T-cell (primary cell): ENCODE measurements at regions of chr2 and their contacts with region 1.

Region 1: GRCh38 chr2:207625018-207625907 is at the start of gene METTL21A:
- DNase-seq: peak; percentile 90 to 98 (median 95)
- ATAC-seq: peak; percentile 78 to 84 (median 82)
- H3K4me3 ChIP-seq: peak within 1 kb of the TSS; percentile 99
- H3K4me3 Mint-ChIP-seq: peak within 1 kb of the TSS; percentile 90 to 92 (median 91)
- H3K27ac ChIP-seq: peak within 1 kb of the TSS; percentile 99
- H3K27ac Mint-ChIP-seq: peak within 1 kb of the TSS; percentile 88 to 91
- H3K4me1 ChIP-seq: peaks cover 6 to 35% of the 10 kb centered on the region in 2 experiments
- H3K4me1 Mint-ChIP-seq: peaks cover 35 to 44% (median 40%) of the 10 kb centered on the region in 3 donors
- H3K27me3 ChIP-seq: no peaks in the 10 kb centered on the region
- H3K27me3 Mint-ChIP-seq: no peaks in the 10 kb centered on the region
- total RNA-seq, gene METTL21A: 14.3 to 23.1 (median 18.2) TPM

Region 2: DNA sequence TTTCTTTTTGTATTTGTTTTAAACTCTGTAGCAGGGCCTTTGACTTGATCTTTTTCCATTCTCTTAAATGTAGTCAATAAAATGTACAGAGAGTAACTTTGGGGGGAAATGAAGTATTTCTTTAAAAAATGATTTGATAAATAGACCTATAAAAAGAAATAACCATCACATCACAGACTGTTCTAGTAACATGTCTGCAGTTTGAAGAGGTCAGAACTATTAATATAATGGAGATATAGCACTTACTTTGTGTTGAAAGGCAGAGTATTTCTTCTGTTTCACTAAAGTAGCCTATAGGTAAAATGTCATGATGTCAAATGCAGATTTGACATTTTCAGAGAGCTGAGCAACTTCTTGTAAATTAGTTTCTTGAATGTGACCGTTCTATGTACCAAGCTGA is 1038.7 kb before region 1 on chr2:
- CTCF ChIA-PET with region 1: no interaction called
- POLR2A ChIA-PET with region 1: no interaction called
- DNase-seq: no peak
- ATAC-seq: no peak
- H3K4me3 ChIP-seq: no peak overlapping the region
- H3K4me3 Mint-ChIP-seq: no peak overlapping the region
- H3K27ac ChIP-seq: no peak overlapping the region
- H3K27ac Mint-ChIP-seq: no peak overlapping the region
- H3K4me1 ChIP-seq: no peaks in the 10 kb centered on the region
- H3K4me1 Mint-ChIP-seq: no peaks in the 10 kb centered on the region
- H3K27me3 ChIP-seq: peaks cover 0 to 9% of the 10 kb centered on the region in 2 experiments
- H3K27me3 Mint-ChIP-seq: peaks cover 14 to 22% of the 10 kb centered on the region in 2 donors

Region 3: DNA sequence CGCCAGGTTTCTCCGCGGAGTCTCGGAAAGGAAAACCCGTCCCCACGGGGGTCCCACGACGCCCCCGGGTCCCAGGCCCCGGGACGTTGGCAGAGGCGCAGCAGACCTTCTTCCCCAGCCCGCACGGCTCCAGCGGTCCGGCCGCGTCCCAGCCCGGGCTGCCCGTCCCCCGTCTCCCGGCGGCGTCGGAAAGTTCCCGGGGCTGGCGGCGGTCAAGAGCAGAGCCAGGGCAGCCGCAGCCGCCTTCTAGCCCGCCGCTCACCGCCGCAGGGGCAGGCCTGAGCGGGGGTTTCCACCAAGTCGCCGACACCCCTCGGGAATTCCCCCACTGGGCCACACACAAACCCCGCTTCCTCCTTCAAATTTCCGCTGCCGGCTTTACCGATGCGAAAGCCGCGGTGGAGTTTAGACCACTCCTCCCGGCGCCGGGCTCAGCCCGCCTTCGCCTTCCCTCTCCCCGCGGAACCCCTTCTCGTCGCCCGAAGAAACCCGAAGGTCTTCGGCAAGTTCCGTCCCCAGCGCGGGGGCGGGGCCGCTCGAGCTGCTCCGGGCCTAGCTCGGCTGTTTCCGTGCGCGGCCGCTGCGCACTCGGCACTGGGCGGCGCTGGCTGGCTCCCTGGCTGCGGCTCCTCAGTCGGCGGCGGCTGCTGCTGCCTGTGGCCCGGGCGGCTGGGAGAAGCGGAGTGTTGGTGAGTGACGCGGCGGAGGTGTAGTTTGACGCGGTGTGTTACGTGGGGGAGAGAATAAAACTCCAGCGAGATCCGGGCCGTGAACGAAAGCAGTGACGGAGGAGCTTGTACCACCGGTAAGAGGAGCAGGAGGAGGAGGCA is 95.7 kb before region 1 on chr2 and contains the start of gene CREB1:
- CTCF ChIA-PET with region 1: interaction called, 3 to 18 read pairs
- POLR2A ChIA-PET with region 1: interaction called, 3 to 25 read pairs
- DNase-seq: peak; percentile 98 to 100 (median 99)
- ATAC-seq: peak; percentile 82 to 90 (median 86)
- H3K4me3 ChIP-seq: peak within 1 kb of the TSS; percentile 83 to 100
- H3K4me3 Mint-ChIP-seq: peak within 1 kb of the TSS; percentile 84 to 100 (median 99)
- H3K27ac ChIP-seq: peak within 1 kb of the TSS; percentile 100
- H3K27ac Mint-ChIP-seq: peak within 1 kb of the TSS; percentile 100
- H3K4me1 ChIP-seq: peaks cover 40 to 58% of the 10 kb centered on the region in 2 experiments
- H3K4me1 Mint-ChIP-seq: peaks cover 55 to 69% (median 67%) of the 10 kb centered on the region in 3 donors
- H3K27me3 ChIP-seq: no peaks in the 10 kb centered on the region
- H3K27me3 Mint-ChIP-seq: no peaks in the 10 kb centered on the region
- total RNA-seq, gene CREB1: 94.0 to 118 (median 100) TPM

Region 4: DNA sequence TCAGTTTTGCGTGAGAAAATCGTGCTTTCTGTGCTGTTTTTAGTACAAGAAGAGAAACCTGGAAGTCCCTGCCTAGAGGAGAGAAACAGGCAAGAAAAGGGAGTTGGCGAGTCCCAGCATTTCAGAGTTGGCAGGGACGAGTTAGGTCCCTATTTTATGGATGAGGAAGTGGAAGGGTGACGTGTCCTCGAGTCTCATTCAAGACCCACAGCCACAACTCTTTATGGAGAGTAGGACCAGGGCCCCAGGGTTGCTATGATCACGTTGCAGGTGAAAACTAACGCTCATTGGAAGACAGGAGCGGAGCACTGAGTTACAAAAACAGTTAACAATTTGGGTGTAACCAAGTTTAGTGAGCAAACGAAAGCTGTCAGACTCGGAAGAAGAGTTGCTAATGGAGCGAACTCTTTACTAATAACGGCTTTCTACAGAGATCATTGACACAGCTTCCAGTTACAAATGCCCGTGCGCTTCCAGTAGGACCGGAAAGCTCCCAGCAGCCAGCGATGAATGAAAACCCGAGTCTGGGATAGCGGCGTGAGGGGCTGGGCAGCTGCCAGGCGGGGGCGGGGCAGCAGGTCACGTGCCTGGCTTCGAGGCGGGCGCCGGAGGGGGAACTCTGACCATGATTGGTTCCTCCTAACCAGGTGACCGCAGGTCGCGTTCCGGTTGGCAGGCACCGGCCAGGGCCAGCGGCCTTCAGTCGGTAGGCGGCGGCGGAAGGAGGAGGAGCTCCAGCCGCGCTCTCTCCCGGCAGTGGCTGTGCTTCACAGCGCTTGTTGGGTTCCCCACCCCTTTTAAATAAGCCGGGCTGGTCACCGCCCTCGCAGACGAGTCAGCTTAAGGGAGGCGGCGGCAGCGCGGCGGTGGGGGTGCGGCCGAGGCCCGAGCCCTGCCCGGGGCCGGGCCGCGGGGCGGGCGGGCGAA is 85.8 kb after region 1 on chr2 and contains the start of gene CCNYL1:
- CTCF ChIA-PET with region 1: interaction called, 4 to 23 read pairs
- POLR2A ChIA-PET with region 1: interaction called, 3 to 18 read pairs
- DNase-seq: peak; percentile 90 to 99 (median 98)
- ATAC-seq: peak; percentile 95 to 98 (median 96)
- H3K4me3 ChIP-seq: peak within 1 kb of the TSS; percentile 84
- H3K4me3 Mint-ChIP-seq: peak within 1 kb of the TSS; percentile 95 to 99 (median 96)
- H3K27ac ChIP-seq: peak within 1 kb of the TSS; percentile 65
- H3K27ac Mint-ChIP-seq: peak within 1 kb of the TSS; percentile 77 to 86
- H3K4me1 ChIP-seq: peaks cover 8 to 17% of the 10 kb centered on the region in 2 experiments
- H3K4me1 Mint-ChIP-seq: peaks cover 26 to 34% (median 28%) of the 10 kb centered on the region in 3 donors
- H3K27me3 ChIP-seq: peaks cover 0 to 6% of the 10 kb centered on the region in 2 experiments
- H3K27me3 Mint-ChIP-seq: no peaks in the 10 kb centered on the region
- total RNA-seq, gene CCNYL1: 9.0 to 13.6 (median 11.0) TPM

Region 5: GRCh38 chr2:207792244-207792785 is 167.1 kb after region 1 on chr2:
- CTCF ChIA-PET with region 1: no interaction called
- POLR2A ChIA-PET with region 1: interaction called in 1 of 2 experiments, 14 read pairs
- DNase-seq: no peak
- ATAC-seq: no peak
- H3K4me3 ChIP-seq: no peak overlapping the region
- H3K4me3 Mint-ChIP-seq: no peak overlapping the region
- H3K27ac ChIP-seq: no peak overlapping the region
- H3K27ac Mint-ChIP-seq: no peak overlapping the region
- H3K4me1 ChIP-seq: no peaks in the 10 kb centered on the region
- H3K4me1 Mint-ChIP-seq: no peaks in the 10 kb centered on the region
- H3K27me3 ChIP-seq: peaks cover 0 to 14% of the 10 kb centered on the region in 2 experiments
- H3K27me3 Mint-ChIP-seq: peaks cover 8 to 17% of the 10 kb centered on the region in 2 donors

Region 6: DNA sequence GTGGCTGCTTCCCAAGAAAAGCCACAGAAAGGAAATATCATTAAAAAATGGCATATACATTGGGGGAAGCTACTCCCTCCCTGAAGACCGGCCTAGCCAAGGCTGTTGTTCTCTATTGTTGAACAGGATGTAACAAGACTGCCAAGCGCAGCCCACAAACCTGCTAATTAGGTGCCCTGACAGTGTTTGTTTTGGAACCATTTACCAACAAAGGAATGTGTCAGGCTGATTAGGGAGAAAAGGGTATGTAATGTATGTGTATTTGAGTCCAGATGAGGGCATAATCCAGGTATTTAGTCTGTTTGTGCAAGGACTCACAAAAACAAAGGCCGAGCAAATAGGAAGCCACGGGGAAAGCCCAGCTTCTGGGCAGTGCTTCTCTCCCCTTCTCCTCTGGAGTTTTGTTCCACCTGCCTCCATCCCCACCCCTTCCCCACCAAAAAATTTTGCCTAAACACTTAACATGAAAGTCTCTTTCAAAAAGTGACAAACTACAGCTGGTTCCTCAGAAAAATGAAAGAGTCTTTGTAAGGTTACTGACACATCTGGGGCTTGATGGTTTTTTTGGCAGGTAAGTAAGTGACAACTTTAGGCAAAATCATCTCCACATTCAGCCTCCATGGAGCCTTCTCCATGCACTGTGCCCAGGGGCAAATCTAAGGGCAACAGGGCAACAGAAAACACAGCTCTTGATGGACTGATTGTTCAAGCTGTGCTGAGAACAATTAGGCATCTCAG is 222.7 kb after region 1 on chr2:
- CTCF ChIA-PET with region 1: no interaction called
- POLR2A ChIA-PET with region 1: no interaction called
- DNase-seq: no peak
- ATAC-seq: no peak
- H3K4me3 ChIP-seq: no peak overlapping the region
- H3K4me3 Mint-ChIP-seq: no peak overlapping the region
- H3K27ac ChIP-seq: no peak overlapping the region
- H3K27ac Mint-ChIP-seq: no peak overlapping the region
- H3K4me1 ChIP-seq: no peaks in the 10 kb centered on the region
- H3K4me1 Mint-ChIP-seq: peaks cover 0 to 2% (median 0%) of the 10 kb centered on the region in 3 donors
- H3K27me3 ChIP-seq: no peaks in the 10 kb centered on the region
- H3K27me3 Mint-ChIP-seq: no peaks in the 10 kb centered on the region

Region 7: DNA sequence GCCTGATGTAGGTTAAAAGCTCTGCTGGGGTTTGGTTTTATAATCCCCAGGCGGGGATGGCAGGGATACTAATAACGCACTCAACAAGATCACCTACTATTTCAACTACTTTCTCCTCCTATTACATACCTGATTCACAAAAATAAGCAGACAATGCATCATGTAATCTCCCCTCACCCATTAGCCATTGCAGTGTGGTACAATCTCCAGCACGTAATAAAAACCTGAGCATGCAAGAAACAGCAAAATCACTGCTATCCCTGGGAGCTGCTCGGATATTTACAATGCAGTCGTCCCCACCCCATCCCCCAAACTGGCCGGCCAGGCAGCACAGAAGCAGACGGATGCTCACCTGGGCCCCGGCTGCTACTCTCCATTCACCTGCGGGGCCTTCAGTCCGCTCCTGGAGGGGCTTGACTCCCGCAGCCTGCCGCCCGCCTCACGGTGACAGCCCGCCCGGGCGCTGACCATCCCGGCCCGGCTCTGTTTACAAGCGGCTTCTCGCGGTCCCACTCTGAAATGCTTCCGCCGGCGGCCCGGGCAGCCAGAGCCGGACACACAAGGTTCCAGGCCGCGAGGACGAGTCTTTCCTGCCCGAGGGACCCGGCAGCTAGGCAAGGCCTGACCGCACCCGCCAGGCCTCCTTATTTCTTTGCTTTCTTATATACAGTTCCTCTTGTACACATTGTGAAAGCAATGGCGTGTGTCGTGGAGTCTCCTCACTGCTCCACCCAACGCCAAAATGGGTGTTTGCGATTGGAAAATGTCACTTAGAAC is 400.0 kb after region 1 on chr2 and contains the start of gene PLEKHM3:
- CTCF ChIA-PET with region 1: interaction called, 4 to 5 read pairs
- POLR2A ChIA-PET with region 1: interaction called in 1 of 2 experiments, 17 read pairs
- DNase-seq: peak; percentile 29 to 80 (median 56)
- ATAC-seq: peak; percentile 76 to 89 (median 81)
- H3K4me3 ChIP-seq: peak within 1 kb of the TSS; percentile 70 to 91
- H3K4me3 Mint-ChIP-seq: peak within 1 kb of the TSS; percentile 92 to 93 (median 93)
- H3K27ac ChIP-seq: peak within 1 kb of the TSS; percentile 76
- H3K27ac Mint-ChIP-seq: peak within 1 kb of the TSS; percentile 74 to 98
- H3K4me1 ChIP-seq: peaks cover 2 to 11% of the 10 kb centered on the region in 2 experiments
- H3K4me1 Mint-ChIP-seq: peaks cover 28 to 47% (median 31%) of the 10 kb centered on the region in 3 donors
- H3K27me3 ChIP-seq: no peaks in the 10 kb centered on the region
- H3K27me3 Mint-ChIP-seq: no peaks in the 10 kb centered on the region
- total RNA-seq, gene PLEKHM3: 12.3 to 18.1 (median 13.9) TPM